ENCODE measurements at regions of chr3 and their contacts with region 1.

Region 1: DNA sequence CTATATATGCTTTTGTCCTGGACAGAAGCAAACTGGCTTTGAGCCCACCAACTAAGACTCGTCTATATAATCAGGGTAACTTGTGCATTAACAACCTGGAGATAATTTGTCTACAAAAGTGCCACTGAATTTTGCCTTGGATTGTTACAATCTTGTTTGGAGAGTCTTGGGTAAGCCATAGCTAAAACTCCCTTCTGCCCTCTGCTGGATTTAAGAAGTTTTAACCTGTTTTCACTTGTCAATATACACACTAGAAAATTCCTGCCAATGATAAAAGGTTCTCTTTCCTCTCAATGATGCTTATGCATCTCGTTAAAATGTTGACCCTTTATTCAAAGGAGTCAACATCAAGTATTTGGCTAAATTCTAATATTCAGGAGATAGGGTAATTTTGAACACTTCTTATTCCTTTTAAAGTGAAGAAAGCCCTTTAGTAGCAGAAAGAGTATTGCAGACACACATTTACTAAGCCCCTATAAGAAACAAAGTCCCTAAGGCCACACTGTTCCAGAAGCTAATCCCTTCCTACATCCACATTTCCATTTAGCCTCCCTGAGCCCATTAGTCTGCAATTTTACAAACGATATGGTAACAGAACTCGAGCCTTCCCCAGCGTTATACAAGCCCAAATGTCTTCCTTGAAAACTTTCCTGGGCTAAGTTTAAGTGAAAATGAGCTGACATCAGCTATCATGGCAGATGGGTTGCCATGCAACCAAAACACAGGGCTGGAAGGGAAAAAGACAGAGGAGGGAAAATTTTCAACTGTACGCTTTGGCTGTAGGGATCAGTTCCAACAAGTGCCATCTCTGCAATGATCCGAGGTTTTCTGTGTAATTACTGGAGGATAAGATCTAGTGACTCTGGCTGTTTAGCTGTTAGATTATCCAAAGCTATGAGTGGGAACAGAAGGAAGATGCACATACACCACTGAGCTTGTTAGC is 75.9 kb upstream of the FGF12 start:
- DNase-seq: no peak
- H3K4me3 ChIP-seq: no peak overlapping the region
- H3K27ac ChIP-seq: no peak overlapping the region
- H3K4me1 ChIP-seq: peaks cover 16% of the 10 kb centered on the region
- H3K27me3 ChIP-seq: no peaks in the 10 kb centered on the region
- CTCF ChIP-seq: peak; percentile 69

Region 2: GRCh38 chr3:192467230-192468140 is 335.7 kb before region 1 on chr3:
- intact Hi-C with region 1: loop called (anchors 5 kb)
- DNase-seq: no peak
- H3K4me3 ChIP-seq: no peak overlapping the region
- H3K27ac ChIP-seq: peak overlapping the region; percentile 24
- H3K4me1 ChIP-seq: peaks cover 13% of the 10 kb centered on the region
- H3K27me3 ChIP-seq: no peaks in the 10 kb centered on the region
- CTCF ChIP-seq: peak; percentile 92